ENCODE measurements at regions of chr11 and their contacts with region 1.

Region 1: GRCh38 chr11:27497284-27497866 is 9.2 kb downstream of the LIN7C start:
- DNase-seq: no peak
- ATAC-seq: no peak
- H3K4me3 ChIP-seq: no peak overlapping the region
- H3K27ac ChIP-seq: no peak overlapping the region
- H3K4me1 ChIP-seq: no peaks in the 10 kb centered on the region
- H3K27me3 ChIP-seq: no peaks in the 10 kb centered on the region
- CTCF ChIP-seq: peak; percentile 59; the same call in 1 of the 2 replicates

Region 2: GRCh38 chr11:27464154-27464759 is 33.1 kb before region 1 on chr11:
- CTCF ChIA-PET with region 1: interaction called, 13 read pairs
- POLR2A ChIA-PET with region 1: no interaction called
- in situ Hi-C with region 1: no loop called
- intact Hi-C with region 1: no loop called
- DNase-seq: no peak
- ATAC-seq: peak; percentile 79
- H3K4me3 ChIP-seq: peak overlapping the region; percentile 0 to 14; a peak in 3 of 4 replicates
- H3K27ac ChIP-seq: peak overlapping the region; percentile 79
- H3K4me1 ChIP-seq: peaks cover 57% of the 10 kb centered on the region
- H3K27me3 ChIP-seq: no peaks in the 10 kb centered on the region
- CTCF ChIP-seq: no peak

Region 3: GRCh38 chr11:27532652-27533325 is 35.4 kb after region 1 on chr11:
- CTCF ChIA-PET with region 1: no interaction called
- POLR2A ChIA-PET with region 1: no interaction called
- in situ Hi-C with region 1: no loop called
- intact Hi-C with region 1: no loop called
- DNase-seq: no peak
- ATAC-seq: no peak
- H3K4me3 ChIP-seq: no peak overlapping the region
- H3K27ac ChIP-seq: no peak overlapping the region
- H3K4me1 ChIP-seq: no peaks in the 10 kb centered on the region
- H3K27me3 ChIP-seq: no peaks in the 10 kb centered on the region; the same call in 1 of the 2 replicates
- CTCF ChIP-seq: no peak

Measured in Panc1 (cell line).